ENCODE measurements at regions of chr10 and their contacts with region 1.

Region 1: GRCh38 chr10:105207476-105208000 is 566.4 kb downstream of the SORCS3 start:
- DNase-seq: no peak
- H3K4me3 ChIP-seq: no peak overlapping the region
- H3K27ac ChIP-seq: no peak overlapping the region
- H3K4me1 ChIP-seq: no peaks in the 10 kb centered on the region
- H3K27me3 ChIP-seq: no peaks in the 10 kb centered on the region
- CTCF ChIP-seq: no peak
- EP300 ChIP-seq: no peak
- POLR2A ChIP-seq: no peak

Region 2: GRCh38 chr10:105128111-105128510 is 79.4 kb before region 1 on chr10:
- in situ Hi-C with region 1: no loop called
- intact Hi-C with region 1: loop called (anchors 2 kb)
- DNase-seq: no peak
- H3K4me3 ChIP-seq: no peak overlapping the region
- H3K27ac ChIP-seq: no peak overlapping the region
- H3K4me1 ChIP-seq: no peaks in the 10 kb centered on the region
- H3K27me3 ChIP-seq: no peaks in the 10 kb centered on the region
- CTCF ChIP-seq: no peak
- EP300 ChIP-seq: no peak
- POLR2A ChIP-seq: no peak